ENCODE measurements at regions of chr17 and their contacts with region 1.

Region 1: DNA sequence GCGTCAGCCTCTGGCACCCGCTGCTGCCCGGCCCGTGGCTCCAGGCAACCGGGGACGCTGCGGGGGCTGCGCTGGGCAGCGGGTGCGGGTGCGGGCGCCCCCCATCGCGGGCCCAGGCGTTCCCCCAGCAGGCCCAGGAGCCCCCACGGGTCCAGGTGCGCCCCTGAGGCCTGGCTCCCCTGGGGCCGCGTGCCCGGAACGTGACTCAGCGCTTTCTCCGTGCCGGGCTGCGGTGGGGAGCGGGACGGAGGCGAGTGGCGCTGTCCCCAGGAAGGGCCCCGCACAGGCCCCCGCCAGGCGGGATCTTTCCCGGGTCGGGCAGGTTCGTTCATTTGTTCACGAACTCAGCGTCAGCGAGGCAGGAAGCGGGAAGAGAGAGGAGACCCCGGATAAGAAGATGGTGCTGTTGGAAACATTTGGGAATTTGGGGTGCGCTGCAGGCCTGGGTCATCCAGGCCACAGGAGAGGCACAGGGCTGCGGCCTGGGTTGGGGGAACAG is 18.4 kb upstream of the EXOC7 start:
- DNase-seq: peak in 1 of 2 experiments; percentile 79
- H3K4me3 ChIP-seq: peak overlapping the region in 3 of 4 experiments; percentile 1 to 48 (median 10); a peak in 5 of 8 replicates
- H3K27ac ChIP-seq: no peak overlapping the region
- H3K4me1 ChIP-seq: peaks cover 7 to 32% (median 19%) of the 10 kb centered on the region in 4 experiments
- H3K27me3 ChIP-seq: peaks cover 0 to 13% (median 7%) of the 10 kb centered on the region in 4 experiments; a peak in 4 of 7 replicates
- CTCF ChIP-seq: no peak
- EP300 ChIP-seq: no peak
- POLR2A ChIP-seq: no peak
- RAD21 ChIP-seq: no peak

Region 2: GRCh38 chr17:75950821-75951554 is 171.0 kb before region 1 on chr17:
- CTCF ChIA-PET with region 1: no interaction called
- POLR2A ChIA-PET with region 1: no interaction called
- DNase-seq: no peak
- H3K4me3 ChIP-seq: no peak overlapping the region
- H3K27ac ChIP-seq: no peak overlapping the region
- H3K4me1 ChIP-seq: no peaks in the 10 kb centered on the region
- H3K27me3 ChIP-seq: no peaks in the 10 kb centered on the region
- CTCF ChIP-seq: no peak
- EP300 ChIP-seq: no peak
- POLR2A ChIP-seq: no peak
- RAD21 ChIP-seq: no peak

Region 3: GRCh38 chr17:76048711-76049110 is 73.3 kb before region 1 on chr17:
- CTCF ChIA-PET with region 1: no interaction called
- POLR2A ChIA-PET with region 1: no interaction called
- DNase-seq: no peak
- H3K4me3 ChIP-seq: no peak overlapping the region
- H3K27ac ChIP-seq: no peak overlapping the region
- H3K4me1 ChIP-seq: peaks cover 0 to 2% (median 0%) of the 10 kb centered on the region in 4 experiments; a peak in 1 of 7 replicates
- H3K27me3 ChIP-seq: no peaks in the 10 kb centered on the region
- CTCF ChIP-seq: no peak
- EP300 ChIP-seq: no peak
- POLR2A ChIP-seq: no peak
- RAD21 ChIP-seq: no peak

Region 4: DNA sequence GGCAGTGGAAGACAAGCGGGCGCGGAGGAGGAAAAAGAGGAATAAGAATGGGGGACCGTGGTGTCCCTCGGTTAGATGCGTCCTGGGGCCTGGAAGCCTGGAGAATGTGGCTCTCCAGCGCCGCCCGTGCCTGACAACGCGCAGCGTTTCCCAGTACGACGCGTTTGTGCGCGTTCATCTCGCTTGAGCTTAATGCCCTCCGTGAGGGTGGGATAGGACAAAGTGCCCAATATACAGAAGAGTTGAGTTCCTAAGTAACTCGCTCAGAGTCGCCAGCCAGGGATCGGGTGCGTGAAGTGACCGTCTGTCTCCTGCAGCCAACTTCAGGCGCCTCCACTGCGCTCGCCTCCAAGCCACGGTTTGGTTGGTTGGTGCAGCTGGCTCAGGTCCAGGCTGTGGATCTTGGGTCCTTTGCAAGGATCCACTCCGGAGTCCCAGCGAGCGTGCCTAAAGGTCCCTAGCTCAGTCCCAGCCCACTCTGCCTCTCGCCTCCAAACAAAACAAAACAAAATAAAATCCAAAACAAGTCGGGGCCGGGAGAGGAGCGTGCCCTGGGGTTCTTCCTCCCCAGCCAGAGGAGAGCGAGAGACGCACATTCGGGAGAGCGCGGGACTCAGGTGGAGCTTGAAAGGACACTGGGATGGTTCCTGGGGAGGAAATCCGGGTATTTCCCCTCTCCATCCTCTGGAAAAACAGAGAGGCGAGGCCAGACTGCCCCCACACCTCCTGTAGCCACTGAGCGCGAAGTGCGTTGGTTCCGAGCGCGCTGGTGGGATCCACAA is 46.4 kb before region 1 on chr17:
- CTCF ChIA-PET with region 1: interaction called, 20 read pairs
- POLR2A ChIA-PET with region 1: interaction called, 5 read pairs
- DNase-seq: peak in 1 of 2 experiments; percentile 81
- H3K4me3 ChIP-seq: peak overlapping the region; percentile 21 to 60 (median 40); a peak in 5 of 8 replicates
- H3K27ac ChIP-seq: no peak overlapping the region
- H3K4me1 ChIP-seq: peaks cover 0 to 54% (median 36%) of the 10 kb centered on the region in 4 experiments; a peak in 6 of 7 replicates
- H3K27me3 ChIP-seq: peaks cover 54 to 72% (median 68%) of the 10 kb centered on the region in 4 experiments
- CTCF ChIP-seq: peak; percentile 31 to 75 (median 68)
- EP300 ChIP-seq: no peak
- POLR2A ChIP-seq: no peak
- RAD21 ChIP-seq: peak; percentile 33 to 40; a peak in 3 of 4 replicates

Region 5: GRCh38 chr17:76103274-76104139 is 18.5 kb before region 1 on chr17 and contains the start of gene EXOC7:
- CTCF ChIA-PET with region 1: interaction called, 17 read pairs
- POLR2A ChIA-PET with region 1: interaction called, 5 read pairs
- DNase-seq: peak; percentile 73 to 98
- H3K4me3 ChIP-seq: peak within 1 kb of the TSS; percentile 53 to 81 (median 73)
- H3K27ac ChIP-seq: peak within 1 kb of the TSS; percentile 78
- H3K4me1 ChIP-seq: peaks cover 6 to 16% (median 9%) of the 10 kb centered on the region in 4 experiments; a peak in 6 of 7 replicates
- H3K27me3 ChIP-seq: no peaks in the 10 kb centered on the region
- CTCF ChIP-seq: no peak
- EP300 ChIP-seq: no peak
- POLR2A ChIP-seq: peak in 1 of 2 experiments; percentile 66; a peak in 2 of 3 replicates
- RAD21 ChIP-seq: peak in 1 of 2 experiments; percentile 14; a peak in 1 of 4 replicates
- total RNA-seq, gene EXOC7: 92.6 and 95.3 TPM in 2 replicates

Region 6: DNA sequence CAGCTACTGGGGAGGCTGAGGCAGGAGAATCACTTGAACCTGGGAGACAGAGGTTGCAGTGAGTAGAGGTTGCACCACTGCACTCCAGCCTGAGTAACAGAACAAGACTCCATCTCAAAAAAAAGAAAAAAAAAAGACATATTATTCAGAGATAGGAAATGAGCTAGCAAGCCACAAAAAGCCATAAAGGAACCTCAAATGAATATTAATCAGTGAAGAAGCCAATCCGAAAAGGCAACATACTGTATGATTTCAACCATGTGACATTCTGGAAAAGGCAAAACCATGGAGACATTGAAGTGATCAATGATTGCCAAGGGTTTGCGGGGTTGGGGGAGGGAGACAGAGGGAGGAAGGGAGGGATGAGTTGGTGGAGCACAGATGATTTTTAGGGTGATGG is 10.0 kb before region 1 on chr17:
- CTCF ChIA-PET with region 1: interaction called, 17 read pairs
- POLR2A ChIA-PET with region 1: interaction called, 4 read pairs
- DNase-seq: no peak
- H3K4me3 ChIP-seq: no peak overlapping the region
- H3K27ac ChIP-seq: no peak overlapping the region
- H3K4me1 ChIP-seq: no peaks in the 10 kb centered on the region
- H3K27me3 ChIP-seq: no peaks in the 10 kb centered on the region
- CTCF ChIP-seq: no peak
- EP300 ChIP-seq: no peak
- POLR2A ChIP-seq: no peak
- RAD21 ChIP-seq: no peak

Region 7: DNA sequence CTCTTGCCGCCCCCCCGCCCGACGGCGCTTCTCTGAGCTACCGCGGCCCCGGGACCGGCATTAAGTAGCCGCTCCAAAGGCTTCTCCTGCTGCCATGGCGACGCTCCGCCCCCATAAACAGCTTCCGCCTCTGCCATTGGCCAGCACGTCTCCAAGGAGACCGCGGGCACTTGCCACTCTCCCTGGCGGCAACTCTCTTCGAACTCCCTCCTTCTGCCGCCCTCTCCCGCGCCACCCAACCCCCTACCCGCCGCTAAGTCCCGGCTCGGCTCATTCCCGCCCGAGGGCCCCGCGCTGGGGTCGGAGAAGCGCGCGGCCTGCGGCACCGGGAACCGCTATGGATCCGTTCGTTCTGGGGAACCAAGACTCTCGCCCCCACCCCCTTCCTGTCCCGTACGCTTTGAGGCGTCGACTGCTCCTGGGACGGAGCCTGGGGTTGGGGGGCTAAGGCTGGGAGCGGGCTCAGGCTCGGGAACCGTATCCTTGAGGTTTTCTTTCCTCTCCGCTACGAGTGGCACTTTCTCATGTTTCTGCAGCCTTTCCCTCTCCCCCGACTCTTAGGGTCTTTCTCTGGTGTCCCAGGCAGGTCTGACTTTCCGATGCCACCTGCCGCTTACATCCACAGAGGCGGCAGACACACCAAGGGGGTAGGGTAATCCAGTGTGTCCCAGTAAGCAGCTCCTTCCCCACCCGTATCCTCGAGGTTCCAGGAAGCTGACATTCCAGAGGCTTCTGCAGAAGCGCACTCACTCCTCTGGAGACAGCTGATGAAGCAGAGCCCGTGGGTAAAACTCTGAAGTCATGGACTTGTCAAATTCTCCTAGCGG is 19.4 kb after region 1 on chr17 and contains the start of gene FOXJ1:
- CTCF ChIA-PET with region 1: interaction called, 778 read pairs
- POLR2A ChIA-PET with region 1: interaction called, 70 read pairs
- DNase-seq: peak; percentile 88 to 100
- H3K4me3 ChIP-seq: peak within 1 kb of the TSS; percentile 53 to 71 (median 58)
- H3K27ac ChIP-seq: no peak within 1 kb of the TSS
- H3K4me1 ChIP-seq: peaks cover 17 to 59% (median 54%) of the 10 kb centered on the region in 4 experiments
- H3K27me3 ChIP-seq: peaks cover 31 to 67% (median 60%) of the 10 kb centered on the region in 4 experiments
- CTCF ChIP-seq: no peak
- EP300 ChIP-seq: no peak
- POLR2A ChIP-seq: no peak
- RAD21 ChIP-seq: no peak
- total RNA-seq, gene FOXJ1: 4.9 and 5.4 TPM in 2 replicates

Region 8: DNA sequence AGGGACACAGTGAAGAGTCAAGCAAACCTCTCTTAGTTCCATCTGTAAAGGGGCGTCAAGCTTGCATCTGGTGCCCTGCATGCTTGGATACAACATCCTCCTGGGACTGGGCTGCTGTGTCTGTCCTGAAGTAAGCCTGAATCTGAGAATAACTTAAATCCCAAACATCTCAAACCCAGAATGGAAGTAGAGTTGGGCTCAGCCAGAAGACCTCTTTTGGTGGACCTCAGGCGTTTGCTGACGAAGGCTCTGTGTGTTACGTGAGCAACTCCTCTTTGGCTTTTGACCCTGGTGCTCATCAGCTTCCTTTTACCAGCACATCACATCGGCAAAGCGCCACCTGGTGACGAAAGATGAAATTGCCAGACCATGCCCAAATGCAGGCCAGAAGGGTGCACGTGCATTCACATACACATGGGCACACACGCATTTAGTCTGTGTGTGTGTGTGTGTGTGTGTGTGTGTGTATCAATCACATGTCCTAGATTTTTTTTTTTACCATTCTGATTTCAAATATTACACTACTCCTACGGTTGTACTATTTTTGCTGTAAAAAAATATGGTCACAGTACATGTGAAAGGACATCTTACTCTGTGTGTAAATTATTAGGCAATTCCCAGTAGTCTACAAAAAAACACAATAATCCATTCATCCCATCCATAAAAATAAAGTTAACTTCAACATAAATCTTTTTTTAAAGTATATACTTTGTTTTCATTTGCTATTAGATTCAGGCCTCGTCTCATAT is 60.2 kb after region 1 on chr17:
- CTCF ChIA-PET with region 1: interaction called, 238 read pairs
- POLR2A ChIA-PET with region 1: interaction called, 5 read pairs
- DNase-seq: peak; percentile 82 to 99
- H3K4me3 ChIP-seq: no peak overlapping the region
- H3K27ac ChIP-seq: no peak overlapping the region
- H3K4me1 ChIP-seq: peaks cover 0 to 2% (median 0%) of the 10 kb centered on the region in 4 experiments; a peak in 2 of 7 replicates
- H3K27me3 ChIP-seq: no peaks in the 10 kb centered on the region; a peak in 1 of 7 replicates
- CTCF ChIP-seq: peak; percentile 86 to 98 (median 97)
- EP300 ChIP-seq: no peak
- POLR2A ChIP-seq: no peak
- RAD21 ChIP-seq: peak; percentile 80 to 87

Region 9: DNA sequence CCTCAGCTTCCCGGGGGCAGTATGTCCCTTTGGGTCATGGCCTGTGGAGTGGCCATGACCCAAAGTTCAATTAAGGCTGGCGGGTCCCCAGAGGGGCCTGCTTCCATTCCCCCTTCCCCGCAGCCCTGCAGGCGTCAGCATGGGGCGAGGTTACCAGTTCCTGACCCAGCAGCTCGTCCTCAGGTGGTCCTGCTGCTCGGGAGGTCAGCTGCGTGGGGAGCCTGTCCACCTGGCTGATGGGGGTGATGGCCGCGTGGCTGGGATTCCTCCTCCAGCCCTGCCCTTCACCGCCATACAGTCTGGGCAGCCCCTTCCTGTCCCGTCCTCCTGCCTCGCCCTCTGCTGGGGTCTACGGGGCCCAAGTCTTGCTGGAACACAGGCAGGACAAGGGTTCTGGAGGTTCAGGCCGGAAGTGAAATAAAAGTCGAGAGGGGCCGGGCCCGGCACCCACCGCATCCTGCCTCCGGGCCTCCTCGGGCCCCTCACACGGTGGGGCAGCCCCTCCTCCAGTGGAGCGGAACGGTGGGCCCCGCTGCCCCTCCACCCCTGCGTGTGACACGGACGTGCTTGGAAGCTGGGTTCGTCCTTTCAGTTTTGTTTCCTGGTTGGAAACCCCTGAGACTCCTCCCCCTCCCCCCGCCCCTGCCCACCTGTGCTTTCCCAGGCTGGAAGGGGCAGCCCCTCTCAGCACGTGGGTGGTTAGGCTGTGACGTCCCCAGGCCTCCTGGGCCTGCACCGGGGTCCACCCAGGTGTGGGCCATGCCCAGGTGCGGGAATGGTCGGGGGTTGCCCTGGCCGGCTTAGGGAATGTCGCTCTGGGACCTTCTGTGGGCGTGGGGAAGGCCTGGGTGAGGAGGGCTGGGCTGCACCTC is 149.9 kb after region 1 on chr17:
- CTCF ChIA-PET with region 1: interaction called, 32 read pairs
- POLR2A ChIA-PET with region 1: interaction called, 3 read pairs
- DNase-seq: peak in 1 of 2 experiments; percentile 67
- H3K4me3 ChIP-seq: no peak overlapping the region
- H3K27ac ChIP-seq: peak overlapping the region; percentile 43
- H3K4me1 ChIP-seq: peaks cover 5 to 23% (median 17%) of the 10 kb centered on the region in 4 experiments
- H3K27me3 ChIP-seq: no peaks in the 10 kb centered on the region
- CTCF ChIP-seq: peak in 2 of 3 experiments; percentile 4 to 23; a peak in 1 of 4 replicates
- EP300 ChIP-seq: no peak
- POLR2A ChIP-seq: no peak; a peak in 1 of 3 replicates
- RAD21 ChIP-seq: no peak; a peak in 2 of 4 replicates

Region 10: DNA sequence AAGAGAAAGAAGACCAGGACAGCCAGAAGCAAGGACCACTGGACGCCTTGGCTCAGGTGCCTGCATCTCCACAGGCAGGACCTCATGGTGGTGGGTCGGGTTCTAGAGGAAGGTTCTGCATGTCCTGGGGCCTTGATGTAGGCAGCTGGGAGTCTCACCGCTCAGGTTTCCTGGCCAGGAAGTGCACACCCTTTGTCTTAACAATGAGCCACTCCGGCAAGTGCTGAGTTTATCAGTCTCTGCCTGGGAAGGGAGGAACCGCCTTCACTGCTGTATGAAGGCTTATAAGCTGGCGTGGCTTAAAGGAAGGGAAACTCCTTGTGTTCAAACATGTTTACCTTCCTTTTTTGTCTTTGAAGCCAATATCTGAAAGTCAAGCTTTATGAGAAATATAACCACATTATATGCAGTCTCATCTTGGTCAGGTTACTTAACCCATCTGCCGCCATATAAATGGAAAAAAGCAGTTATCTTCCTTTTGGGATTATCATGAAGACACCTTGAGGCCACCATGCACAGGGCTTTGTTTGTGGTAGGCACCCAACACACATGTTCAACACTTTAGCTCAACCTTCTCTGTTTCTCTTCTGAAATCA is 521.7 kb after region 1 on chr17 and contains the start of gene ST6GALNAC1:
- CTCF ChIA-PET with region 1: no interaction called
- POLR2A ChIA-PET with region 1: no interaction called
- DNase-seq: no peak
- H3K4me3 ChIP-seq: no peak within 1 kb of the TSS
- H3K27ac ChIP-seq: no peak within 1 kb of the TSS
- H3K4me1 ChIP-seq: peaks cover 0 to 5% (median 3%) of the 10 kb centered on the region in 4 experiments; a peak in 3 of 7 replicates
- H3K27me3 ChIP-seq: no peaks in the 10 kb centered on the region
- CTCF ChIP-seq: no peak
- EP300 ChIP-seq: no peak
- POLR2A ChIP-seq: no peak
- RAD21 ChIP-seq: no peak
- total RNA-seq, gene ST6GALNAC1: not detected in 2 replicates